PC-9 (cell line): ENCODE measurements at regions of chr1 and their contacts with region 1.

Region 1: GRCh38 chr1:153532769-153533599 is 2.8 kb downstream of the S100A6 start:
- DNase-seq: peak; percentile 53 to 85
- H3K4me3 ChIP-seq: peak overlapping the region; percentile 85; the same call in 1 of the 2 replicates
- H3K27ac ChIP-seq: peak overlapping the region; percentile 81
- H3K4me1 ChIP-seq: peaks cover 44% of the 10 kb centered on the region
- H3K27me3 ChIP-seq: no peaks in the 10 kb centered on the region
- CTCF ChIP-seq: peak; percentile 90

Region 2: DNA sequence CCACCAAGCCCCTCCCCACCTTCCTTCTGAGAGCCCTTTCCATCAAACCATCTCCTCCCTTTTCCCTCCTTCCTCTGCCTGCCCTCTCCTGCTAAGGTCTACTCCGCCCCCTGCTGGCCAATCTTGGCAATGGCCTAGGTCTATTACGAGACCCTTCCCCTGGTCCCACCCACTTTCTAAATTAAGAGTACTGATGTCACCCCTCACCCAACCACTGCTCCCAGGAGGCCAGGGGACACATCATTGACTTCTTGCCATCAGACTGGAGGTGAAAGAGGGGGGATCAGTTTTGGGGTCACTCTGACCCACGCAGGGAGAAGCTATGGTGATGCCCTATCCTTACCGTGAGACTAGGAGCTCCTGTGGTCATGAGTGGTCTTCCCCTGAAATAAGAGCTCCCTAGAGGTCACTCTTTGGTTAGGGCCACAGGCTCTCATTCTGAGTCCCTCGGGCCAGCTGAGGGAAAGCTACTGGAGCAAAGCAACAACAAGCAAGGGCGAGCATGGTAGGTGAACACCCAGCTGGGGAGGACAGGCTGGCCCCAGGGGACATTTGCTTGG is 37.9 kb before region 1 on chr1:
- CTCF ChIA-PET with region 1: no interaction called
- POLR2A ChIA-PET with region 1: no interaction called
- intact Hi-C with region 1: no loop called
- DNase-seq: peak in 1 of 2 experiments; percentile 72
- H3K4me3 ChIP-seq: no peak overlapping the region
- H3K27ac ChIP-seq: no peak overlapping the region
- H3K4me1 ChIP-seq: peaks cover 19% of the 10 kb centered on the region
- H3K27me3 ChIP-seq: no peaks in the 10 kb centered on the region
- CTCF ChIP-seq: peak; percentile 98

Region 3: DNA sequence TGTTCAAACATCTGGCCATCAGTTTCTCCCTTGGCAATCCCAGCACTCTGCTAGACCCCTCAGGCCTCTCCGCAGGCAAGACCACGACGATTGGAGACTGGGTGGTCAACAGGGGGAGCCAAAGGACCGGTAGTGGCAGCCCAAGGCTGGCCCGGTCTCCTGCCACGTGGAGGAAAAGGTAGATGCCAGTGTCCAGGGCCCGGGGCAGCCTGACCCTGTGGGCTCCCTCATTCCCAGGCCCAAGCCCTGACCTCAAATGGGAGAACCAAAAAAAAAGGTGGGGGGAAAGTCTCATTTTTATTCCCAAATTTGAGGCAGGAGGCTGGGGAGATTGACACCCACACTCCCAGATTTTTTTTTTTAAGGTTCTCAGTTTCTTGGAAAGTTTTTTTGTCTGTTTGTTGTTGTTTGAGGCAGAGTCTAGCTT is 22.0 kb before region 1 on chr1:
- CTCF ChIA-PET with region 1: interaction called, 20 read pairs
- POLR2A ChIA-PET with region 1: interaction called, 18 read pairs
- intact Hi-C with region 1: loop called (anchors 1 kb)
- DNase-seq: peak; percentile 52 to 82
- H3K4me3 ChIP-seq: no peak overlapping the region
- H3K27ac ChIP-seq: no peak overlapping the region
- H3K4me1 ChIP-seq: peaks cover 51% of the 10 kb centered on the region
- H3K27me3 ChIP-seq: no peaks in the 10 kb centered on the region
- CTCF ChIP-seq: peak; percentile 96

Region 4: DNA sequence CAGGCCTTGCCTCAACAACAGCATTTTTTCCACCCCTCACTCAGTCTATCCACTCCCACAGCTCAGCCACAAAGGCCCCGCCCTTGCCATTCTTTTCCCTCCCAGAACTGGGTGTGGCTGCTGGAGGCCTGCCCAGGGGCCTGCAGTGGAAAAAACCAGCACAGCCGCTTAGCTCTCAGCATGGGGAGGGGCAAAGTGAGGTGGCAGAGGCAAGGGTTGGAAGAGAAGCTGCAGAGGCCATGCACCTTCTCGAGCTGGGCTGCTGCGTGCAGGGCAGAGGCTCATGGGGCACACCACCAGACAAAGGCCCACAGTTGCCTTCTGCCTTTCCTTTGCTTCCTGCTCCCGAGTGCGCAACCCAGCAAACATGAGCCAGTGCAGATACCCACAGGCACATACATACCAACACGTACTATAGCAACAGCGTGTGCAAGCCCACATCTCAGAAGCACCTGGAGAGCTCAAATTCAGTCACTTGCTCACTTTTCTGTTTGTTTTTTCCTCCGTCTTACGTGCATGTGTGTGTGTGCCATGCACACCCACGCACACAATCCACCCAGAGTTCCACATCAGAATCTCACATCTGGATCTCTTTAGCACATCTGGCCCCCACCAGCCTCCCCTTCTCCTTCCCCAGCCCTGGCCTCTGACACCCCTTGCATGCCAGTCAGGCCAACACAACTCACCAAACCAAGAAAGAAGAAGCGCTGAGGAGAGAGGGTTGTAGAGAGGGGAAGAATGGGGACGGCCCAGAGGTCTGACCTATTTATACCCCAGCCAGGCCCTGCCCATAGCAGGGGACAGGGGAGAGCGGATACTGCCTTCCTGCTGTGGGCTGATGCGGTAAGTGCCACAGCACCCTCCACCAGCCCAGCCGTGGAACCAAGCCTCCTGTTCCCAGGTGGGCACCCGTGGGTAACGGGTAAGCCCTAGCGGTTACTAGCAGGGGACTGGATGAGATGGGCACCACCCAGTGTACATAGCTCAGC is 12.4 kb after region 1 on chr1 and contains the start of gene S100A4:
- CTCF ChIA-PET with region 1: no interaction called
- POLR2A ChIA-PET with region 1: interaction called, 18 read pairs
- intact Hi-C with region 1: loop called (anchors 1 kb)
- DNase-seq: peak; percentile 91 to 98
- H3K4me3 ChIP-seq: peak within 1 kb of the TSS; percentile 61
- H3K27ac ChIP-seq: peak within 1 kb of the TSS; percentile 67
- H3K4me1 ChIP-seq: peaks cover 91% of the 10 kb centered on the region
- H3K27me3 ChIP-seq: no peaks in the 10 kb centered on the region
- CTCF ChIP-seq: no peak
- total RNA-seq, gene S100A4: 303 and 346 TPM in 2 replicates

Region 5: GRCh38 chr1:153566440-153567379 is 33.7 kb after region 1 on chr1:
- CTCF ChIA-PET with region 1: interaction called, 13 read pairs
- POLR2A ChIA-PET with region 1: interaction called, 25 read pairs
- intact Hi-C with region 1: loop called (anchors 1 kb)
- DNase-seq: peak; percentile 96 to 98
- H3K4me3 ChIP-seq: peak overlapping the region; percentile 34; the same call in 1 of the 2 replicates
- H3K27ac ChIP-seq: peak overlapping the region; percentile 97
- H3K4me1 ChIP-seq: peaks cover 56% of the 10 kb centered on the region
- H3K27me3 ChIP-seq: no peaks in the 10 kb centered on the region
- CTCF ChIP-seq: no peak

Region 6: GRCh38 chr1:153608742-153609584 is 76.0 kb after region 1 on chr1:
- CTCF ChIA-PET with region 1: no interaction called
- POLR2A ChIA-PET with region 1: interaction called, 7 read pairs
- intact Hi-C with region 1: loop called (anchors 1 kb)
- DNase-seq: peak; percentile 94 to 98
- H3K4me3 ChIP-seq: peak overlapping the region; percentile 56
- H3K27ac ChIP-seq: peak overlapping the region; percentile 96
- H3K4me1 ChIP-seq: peaks cover 52% of the 10 kb centered on the region
- H3K27me3 ChIP-seq: no peaks in the 10 kb centered on the region
- CTCF ChIP-seq: no peak; the same call in 1 of the 2 replicates

Region 7: DNA sequence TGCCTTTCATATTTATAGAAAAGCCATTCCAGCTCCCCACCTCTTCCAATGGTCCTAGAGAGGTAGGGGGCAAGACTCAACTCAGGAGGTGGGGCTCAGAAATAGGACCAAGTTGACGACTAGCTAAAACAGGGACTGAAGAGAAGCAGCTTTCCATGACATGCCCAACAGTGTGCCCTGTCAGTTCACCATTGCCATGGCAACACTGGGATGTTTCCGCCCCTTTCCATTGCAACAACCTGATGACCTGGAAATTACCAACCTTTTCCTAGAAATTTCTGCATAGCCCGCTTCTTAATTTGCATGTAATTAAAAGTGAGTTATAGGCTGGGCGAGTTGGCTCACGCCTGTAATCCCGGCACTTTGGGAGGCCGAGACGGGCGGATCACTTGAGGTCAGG is 172.5 kb after region 1 on chr1:
- CTCF ChIA-PET with region 1: no interaction called
- POLR2A ChIA-PET with region 1: interaction called, 14 read pairs
- intact Hi-C with region 1: no loop called
- DNase-seq: no peak
- H3K4me3 ChIP-seq: no peak overlapping the region
- H3K27ac ChIP-seq: no peak overlapping the region
- H3K4me1 ChIP-seq: peaks cover 29% of the 10 kb centered on the region
- H3K27me3 ChIP-seq: no peaks in the 10 kb centered on the region
- CTCF ChIP-seq: no peak